ENCODE measurements at regions of chr9 and their contacts with region 1.

Region 1: GRCh38 chr9:69971643-69972449 is 71.8 kb upstream of the MAMDC2 start:
- DNase-seq: peak; percentile 39
- H3K4me3 ChIP-seq: no peak overlapping the region
- CTCF ChIP-seq: peak; percentile 95

Region 2: DNA sequence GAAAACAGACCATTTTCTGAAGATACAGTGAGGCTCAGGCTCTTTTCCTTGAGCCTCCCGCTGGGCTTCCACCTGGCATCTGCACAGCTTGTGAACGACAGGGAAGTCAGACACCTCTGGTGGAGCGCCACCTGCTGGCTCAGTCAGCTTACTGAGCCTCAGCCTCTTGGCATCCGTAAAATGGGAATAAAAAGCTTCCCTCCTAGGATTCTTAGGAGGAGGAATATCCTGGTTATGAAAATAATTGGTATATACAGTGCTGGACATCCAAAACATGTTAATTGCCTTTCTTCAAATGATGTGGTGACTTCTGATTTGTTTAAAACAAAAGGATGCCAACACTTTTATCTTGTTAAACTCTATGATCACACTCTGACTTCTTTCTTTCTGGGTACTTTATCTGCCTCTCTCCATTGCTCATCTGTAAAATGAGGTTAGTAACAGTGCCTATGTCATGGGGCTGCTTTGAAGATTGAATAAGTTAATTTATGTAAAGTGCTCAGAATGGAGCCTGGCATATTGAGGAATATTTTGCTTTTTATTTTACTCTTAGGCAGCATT is 139.3 kb after region 1 on chr9:
- in situ Hi-C with region 1: loop called (anchors 5 kb)
- DNase-seq: peak; percentile 53
- H3K4me3 ChIP-seq: no peak overlapping the region
- CTCF ChIP-seq: peak; percentile 92

Measured in astrocyte of the cerebellum (primary cell).